Left lung (tissue), 14 donors: ENCODE measurements at regions of chr6 and their contacts with region 1.

Region 1: GRCh38 chr6:130885392-130886192 is 58.4 kb downstream of the SMLR1 start:
- DNase-seq: peak in 2 of 4 donors; percentile 65 to 84
- ATAC-seq: peak; percentile 97
- H3K4me3 ChIP-seq: no peak overlapping the region
- H3K27ac ChIP-seq: no peak overlapping the region
- H3K4me1 ChIP-seq: no peaks in the 10 kb centered on the region
- H3K27me3 ChIP-seq: no peaks in the 10 kb centered on the region
- CTCF ChIP-seq: peak; percentile 80 to 84

Region 2: GRCh38 chr6:130749402-130749801 is 136.2 kb before region 1 on chr6:
- intact Hi-C with region 1: no loop called
- DNase-seq: no peak
- ATAC-seq: no peak
- H3K4me3 ChIP-seq: no peak overlapping the region
- H3K27ac ChIP-seq: no peak overlapping the region
- H3K4me1 ChIP-seq: no peaks in the 10 kb centered on the region
- H3K27me3 ChIP-seq: no peaks in the 10 kb centered on the region
- CTCF ChIP-seq: no peak

Region 3: DNA sequence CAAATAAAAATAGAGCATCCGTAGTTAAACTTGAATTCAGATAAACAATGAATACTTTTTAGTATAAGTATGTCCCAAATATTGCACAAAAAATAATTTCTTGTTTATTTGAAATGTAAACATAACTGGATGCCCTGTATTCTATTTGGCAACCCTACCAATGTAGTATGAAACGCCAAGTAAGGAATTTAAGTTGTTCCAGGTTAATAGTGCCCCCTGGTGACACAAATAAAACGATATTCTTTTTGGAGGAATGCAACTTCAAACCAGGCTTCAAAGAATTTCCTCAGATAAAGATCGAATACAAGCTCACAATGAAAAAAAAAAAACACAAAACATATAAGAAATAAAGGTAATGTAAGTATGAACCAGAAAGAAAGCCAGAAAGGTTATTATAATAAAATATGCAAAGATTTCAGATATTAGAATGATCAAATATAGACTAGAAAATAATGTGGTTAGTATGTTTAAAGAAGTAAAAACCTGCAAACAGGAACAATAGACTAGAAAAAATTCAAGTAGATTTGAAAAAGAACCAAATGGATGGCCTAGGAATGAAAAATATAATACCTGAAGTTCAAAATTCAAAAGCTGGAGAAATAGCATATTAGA is 231.3 kb after region 1 on chr6:
- intact Hi-C with region 1: loop called (anchors 5 to 10 kb)
- DNase-seq: no peak
- ATAC-seq: peak; percentile 82
- H3K4me3 ChIP-seq: no peak overlapping the region
- H3K27ac ChIP-seq: no peak overlapping the region
- H3K4me1 ChIP-seq: no peaks in the 10 kb centered on the region
- H3K27me3 ChIP-seq: no peaks in the 10 kb centered on the region
- CTCF ChIP-seq: peak; percentile 47